Activated naive CD4-positive, alpha-beta T cell treated with anti-CD3 and anti-CD28 coated beads for 36 hours (primary cell): ENCODE measurements at regions of chr11 and their contacts with region 1.

Region 1: GRCh38 chr11:60985991-60986915 is 14.8 kb downstream of the CD6 start:
- DNase-seq: peak; percentile 97
- H3K4me3 Mint-ChIP-seq: peak overlapping the region; percentile 77
- H3K27ac Mint-ChIP-seq: peak overlapping the region; percentile 97
- H3K4me1 Mint-ChIP-seq: peaks cover 90% of the 10 kb centered on the region
- H3K27me3 Mint-ChIP-seq: no peaks in the 10 kb centered on the region

Region 2: GRCh38 chr11:60913793-60914632 is 72.2 kb before region 1 on chr11 and contains the start of gene TMEM109:
- CTCF ChIA-PET with region 1: interaction called, 4 read pairs
- intact Hi-C with region 1: loop called (anchors 1 kb)
- DNase-seq: peak; percentile 89
- H3K4me3 Mint-ChIP-seq: peak within 1 kb of the TSS; percentile 94
- H3K27ac Mint-ChIP-seq: peak within 1 kb of the TSS; percentile 95
- H3K4me1 Mint-ChIP-seq: peaks cover 62% of the 10 kb centered on the region
- H3K27me3 Mint-ChIP-seq: no peaks in the 10 kb centered on the region
- total RNA-seq, gene TMEM109: 94.0 to 103 TPM

Region 3: DNA sequence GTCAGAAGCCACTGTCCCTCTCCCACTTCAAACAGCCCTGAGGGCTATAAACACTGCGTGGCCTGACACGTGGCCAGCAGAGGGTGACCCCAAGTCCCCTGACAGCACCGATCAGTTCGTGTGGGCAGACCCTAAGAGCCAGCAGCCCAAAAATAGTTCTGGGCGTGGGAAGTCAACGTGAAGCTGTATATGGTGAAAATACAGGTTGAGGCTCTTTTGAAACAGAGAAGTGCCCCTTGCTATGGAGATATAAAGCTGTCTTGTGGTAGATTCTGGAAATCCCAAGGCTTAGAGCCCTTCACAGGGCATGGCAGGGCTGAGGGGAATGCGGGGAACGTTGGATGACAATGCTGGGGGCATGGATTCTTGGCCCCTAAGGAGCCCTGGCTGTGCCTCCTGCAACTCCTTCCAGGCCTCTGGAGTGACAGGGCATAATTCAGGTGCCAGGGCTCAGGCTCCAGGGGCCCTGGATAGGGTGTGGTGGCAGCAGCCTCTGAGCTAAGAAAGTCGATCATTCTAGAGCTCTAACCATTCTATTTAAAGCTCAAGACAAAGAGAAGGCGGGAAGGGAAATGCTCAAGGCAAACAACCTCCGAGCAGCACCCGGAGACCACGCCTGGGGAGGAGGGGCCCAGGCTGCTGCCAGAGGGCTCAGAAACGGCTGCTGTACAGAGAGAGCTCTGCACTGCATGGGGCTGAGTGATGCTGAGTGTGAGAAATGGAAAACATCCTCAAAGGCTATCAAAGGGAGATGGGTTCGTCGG is 55.7 kb after region 1 on chr11:
- CTCF ChIA-PET with region 1: interaction called, 3 read pairs
- intact Hi-C with region 1: loop called (anchors 1 kb)
- DNase-seq: peak; percentile 93
- H3K4me3 Mint-ChIP-seq: peak overlapping the region; percentile 44
- H3K27ac Mint-ChIP-seq: peak overlapping the region; percentile 97
- H3K4me1 Mint-ChIP-seq: peaks cover 70% of the 10 kb centered on the region
- H3K27me3 Mint-ChIP-seq: no peaks in the 10 kb centered on the region

Region 4: GRCh38 chr11:61091373-61092279 is 105.4 kb after region 1 on chr11:
- CTCF ChIA-PET with region 1: no interaction called
- intact Hi-C with region 1: loop called (anchors 1 kb)
- DNase-seq: peak; percentile 84
- H3K4me3 Mint-ChIP-seq: peak overlapping the region; percentile 92
- H3K27ac Mint-ChIP-seq: peak overlapping the region; percentile 99
- H3K4me1 Mint-ChIP-seq: peaks cover 61% of the 10 kb centered on the region
- H3K27me3 Mint-ChIP-seq: no peaks in the 10 kb centered on the region

Region 5: DNA sequence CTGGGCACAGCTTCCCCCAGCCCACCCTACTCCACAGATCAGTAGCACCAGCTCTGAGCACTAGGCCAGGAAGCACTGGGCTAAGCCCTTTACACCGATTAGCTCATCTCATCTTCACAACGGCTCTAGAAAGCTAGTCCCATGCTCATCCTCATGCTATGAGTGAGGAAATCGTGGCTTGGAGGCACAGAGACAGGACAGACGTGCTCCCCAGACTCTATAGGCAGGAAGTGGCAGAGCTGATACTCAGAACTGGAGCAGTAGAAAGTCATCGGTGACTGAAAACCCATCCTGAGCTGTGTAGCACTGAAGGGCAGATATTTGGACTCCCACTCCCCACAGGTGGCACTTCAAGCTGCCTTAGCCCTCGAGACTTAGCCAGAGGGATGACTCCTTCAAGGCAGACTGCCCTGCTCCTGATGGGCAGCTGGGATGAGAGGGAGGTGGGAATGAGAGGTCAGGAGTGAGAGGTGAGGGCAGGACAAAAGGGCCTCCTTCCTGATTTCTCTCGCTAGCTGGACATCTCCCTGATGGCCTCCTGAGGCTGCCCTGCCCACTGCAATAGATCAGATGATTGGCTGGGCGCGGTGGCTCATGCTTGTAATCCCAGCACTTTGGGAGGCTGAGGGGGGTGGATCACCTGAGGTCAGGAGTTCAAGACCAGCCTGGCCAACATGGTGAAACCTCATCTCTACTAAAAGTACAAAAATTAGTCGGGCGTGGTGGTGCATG is 125.7 kb after region 1 on chr11:
- CTCF ChIA-PET with region 1: interaction called, 3 read pairs
- intact Hi-C with region 1: loop called (anchors 1 kb)
- DNase-seq: peak; percentile 91
- H3K4me3 Mint-ChIP-seq: peak overlapping the region; percentile 71
- H3K27ac Mint-ChIP-seq: no peak overlapping the region
- H3K4me1 Mint-ChIP-seq: peaks cover 99% of the 10 kb centered on the region
- H3K27me3 Mint-ChIP-seq: no peaks in the 10 kb centered on the region

Region 6: GRCh38 chr11:61967116-61967923 is 981.1 kb after region 1 on chr11 and contains the start of gene FTH1:
- CTCF ChIA-PET with region 1: no interaction called
- intact Hi-C with region 1: loop called (anchors 5 kb)
- DNase-seq: peak; percentile 85
- H3K4me3 Mint-ChIP-seq: peak within 1 kb of the TSS; percentile 93
- H3K27ac Mint-ChIP-seq: peak within 1 kb of the TSS; percentile 94
- H3K4me1 Mint-ChIP-seq: peaks cover 67% of the 10 kb centered on the region
- H3K27me3 Mint-ChIP-seq: no peaks in the 10 kb centered on the region
- total RNA-seq, gene FTH1: 1,302 to 1,352 TPM